Dorsolateral prefrontal cortex (tissue), 120 donors: ENCODE measurements at regions of chr19 and their contacts with region 1.

Region 1: GRCh38 chr19:42254989-42255765 is at the start of gene ERF:
- DNase-seq: peak; percentile 83 to 97 (median 94)
- H3K4me3 ChIP-seq: peak within 1 kb of the TSS; percentile 80 to 100 (median 97)
- H3K27ac ChIP-seq: peak within 1 kb of the TSS; percentile 93 to 100 (median 99)
- H3K27me3 ChIP-seq: no peaks in the 10 kb centered on the region
- CTCF ChIP-seq: peak in 1 of 56 donors; percentile 14
- total RNA-seq, gene ERF: 22.2 to 145 (median 47.8) TPM

Region 2: GRCh38 chr19:41795031-41795461 is 460.1 kb before region 1 on chr19:
- intact Hi-C with region 1: no loop called
- DNase-seq: peak in 3 of 10 donors; percentile 13 to 31 (median 18)
- H3K4me3 ChIP-seq: no peak overlapping the region
- H3K27ac ChIP-seq: no peak overlapping the region
- H3K27me3 ChIP-seq: peaks cover 0 to 67% (median 28%) of the 10 kb centered on the region in 45 donors
- CTCF ChIP-seq: peak; percentile 18 to 74 (median 62)

Region 3: GRCh38 chr19:42268704-42269477 is 13.7 kb after region 1 on chr19 and contains the start of gene CIC:
- intact Hi-C with region 1: loop called (anchors 1 to 2 kb)
- DNase-seq: peak; percentile 97 to 100 (median 100)
- H3K4me3 ChIP-seq: peak within 1 kb of the TSS; percentile 47 to 99 (median 82)
- H3K27ac ChIP-seq: peak within 1 kb of the TSS; percentile 90 to 100 (median 99)
- H3K27me3 ChIP-seq: no peaks in the 10 kb centered on the region
- CTCF ChIP-seq: no peak
- total RNA-seq, gene CIC: 76.5 to 169 (median 103) TPM